Right ventricle myocardium superior (tissue), 1 donor: ENCODE measurements at regions of chr12 and their contacts with region 1.

Region 1: DNA sequence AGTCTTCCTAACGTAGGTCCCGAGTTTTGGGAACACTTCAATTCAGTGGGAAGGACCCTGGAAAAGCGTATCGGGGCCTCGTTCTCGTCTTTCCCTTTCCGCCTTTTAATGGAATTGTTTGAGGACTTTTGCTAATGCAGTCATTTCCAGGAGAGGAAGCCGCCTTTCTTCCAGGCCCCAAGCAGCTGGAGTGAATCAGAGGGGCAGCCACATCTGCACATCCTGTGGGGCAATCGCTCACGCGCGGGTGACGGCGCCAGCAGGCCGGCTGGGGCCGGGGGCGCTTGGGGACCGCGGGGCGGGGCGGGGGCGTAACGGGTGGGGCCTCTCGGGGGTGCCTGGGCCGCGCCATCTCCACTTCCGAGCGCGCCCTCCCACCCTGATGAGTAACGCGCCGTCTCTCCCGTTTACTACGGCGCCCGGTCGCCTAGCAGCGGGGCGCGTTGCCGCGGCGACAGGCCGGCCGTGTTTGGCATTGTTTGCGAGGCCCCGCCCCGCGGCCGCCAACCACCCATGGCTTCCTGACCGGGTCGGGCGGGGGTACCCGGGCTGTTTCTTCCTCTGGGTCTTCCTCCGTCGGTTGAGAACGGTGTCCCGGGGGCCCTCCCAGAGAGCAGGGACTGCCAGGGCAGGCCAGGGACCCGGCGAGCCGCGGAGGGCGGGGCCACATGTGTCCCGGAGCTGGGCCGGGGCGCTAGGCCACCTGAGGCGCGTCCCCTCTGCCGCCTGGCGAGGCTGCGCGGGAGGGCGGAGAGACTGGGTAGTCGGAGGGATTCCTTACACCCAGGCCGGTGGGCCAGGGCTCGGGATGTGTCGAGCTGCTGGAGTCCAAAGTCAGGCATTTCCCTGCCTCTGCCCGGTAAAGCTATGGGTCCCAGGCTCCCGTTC is 2.3 kb downstream of the GSG1 start:
- DNase-seq: peak; percentile 96
- ATAC-seq: peak; percentile 88

Region 2: DNA sequence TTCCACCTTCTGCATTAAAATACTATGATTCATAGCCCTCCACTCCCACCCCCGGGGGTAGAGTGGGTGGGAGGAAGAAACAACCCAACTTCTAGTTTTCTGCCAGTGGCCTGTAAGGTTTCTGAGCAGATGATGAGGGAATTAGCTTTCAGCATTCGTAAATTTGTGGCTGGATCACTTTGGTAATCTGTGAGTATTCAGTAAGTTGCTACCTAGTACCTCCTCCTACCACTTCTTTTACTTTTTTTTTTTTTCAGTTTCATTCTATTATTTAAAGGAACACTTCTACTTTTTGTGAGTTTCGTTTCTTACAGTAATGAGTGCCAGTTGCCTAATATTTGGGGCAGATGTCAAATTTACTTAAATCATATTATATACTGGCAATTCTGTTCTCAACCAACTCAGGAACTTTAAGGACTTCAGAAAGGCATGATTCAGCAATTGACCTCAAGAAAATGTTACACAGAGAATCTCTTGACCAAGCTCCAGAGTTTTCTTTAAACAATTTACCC is 53.0 kb after region 1 on chr12:
- intact Hi-C with region 1: loop called (anchors 5 kb)
- DNase-seq: no peak
- ATAC-seq: no peak

Region 3: GRCh38 chr12:13196130-13196921 is 95.2 kb after region 1 on chr12 and contains the start of gene EMP1:
- intact Hi-C with region 1: loop called (anchors 2 kb)
- DNase-seq: peak; percentile 94
- ATAC-seq: peak; percentile 88
- total RNA-seq, gene EMP1: 99.9 TPM

Region 4: GRCh38 chr12:13211859-13212664 is 110.9 kb after region 1 on chr12:
- intact Hi-C with region 1: loop called (anchors 5 kb)
- DNase-seq: no peak
- ATAC-seq: peak; percentile 50